Activated CD4-positive, alpha-beta T cell treated with anti-CD3 and anti-CD28 coated beads for 36 hours (primary cell): ENCODE measurements at regions of chr12 and their contacts with region 1.

Region 1: GRCh38 chr12:68958322-68958721 is 25.4 kb upstream of the CPM start:
- DNase-seq: peak; percentile 67
- ATAC-seq: peak; percentile 93
- H3K4me3 Mint-ChIP-seq: no peak overlapping the region
- H3K27ac Mint-ChIP-seq: peak overlapping the region; percentile 91
- H3K4me1 Mint-ChIP-seq: peaks cover 45% of the 10 kb centered on the region
- H3K27me3 Mint-ChIP-seq: peaks cover 2% of the 10 kb centered on the region

Region 2: DNA sequence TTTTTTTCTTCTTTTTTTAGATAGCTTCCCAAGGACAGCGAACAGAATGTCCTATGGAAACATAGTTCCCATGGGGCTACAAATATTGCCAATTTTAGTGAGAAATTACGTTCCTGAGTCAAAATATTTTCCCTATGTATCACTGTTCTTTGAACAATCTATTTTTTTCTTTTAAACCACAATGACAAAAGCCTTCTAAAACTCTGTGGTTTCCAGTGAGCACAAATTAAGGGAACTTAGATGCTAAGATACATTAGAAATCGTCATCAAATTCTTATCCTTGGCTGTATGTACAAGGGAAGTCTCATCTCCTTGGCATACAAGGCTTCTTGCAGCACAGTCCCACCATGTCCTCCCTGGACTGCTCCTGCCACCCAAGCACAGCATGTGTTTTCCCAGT is 43.3 kb before region 1 on chr12:
- CTCF ChIA-PET with region 1: interaction called, 3 read pairs
- POLR2A ChIA-PET with region 1: no interaction called
- intact Hi-C with region 1: loop called (anchors 2 to 5 kb)
- DNase-seq: no peak
- ATAC-seq: no peak
- H3K4me3 Mint-ChIP-seq: no peak overlapping the region
- H3K27ac Mint-ChIP-seq: no peak overlapping the region
- H3K4me1 Mint-ChIP-seq: peaks cover 7% of the 10 kb centered on the region
- H3K27me3 Mint-ChIP-seq: no peaks in the 10 kb centered on the region

Region 3: GRCh38 chr12:68932961-68933893 is 25.1 kb before region 1 on chr12 and contains the start of gene CPM:
- CTCF ChIA-PET with region 1: no interaction called
- POLR2A ChIA-PET with region 1: no interaction called
- intact Hi-C with region 1: loop called in 1 of 2 experiments (anchors 1 kb)
- DNase-seq: peak; percentile 86
- ATAC-seq: peak; percentile 98
- H3K4me3 Mint-ChIP-seq: peak within 1 kb of the TSS; percentile 80
- H3K27ac Mint-ChIP-seq: peak within 1 kb of the TSS; percentile 71
- H3K4me1 Mint-ChIP-seq: peaks cover 9% of the 10 kb centered on the region
- H3K27me3 Mint-ChIP-seq: peaks cover 20% of the 10 kb centered on the region
- total RNA-seq, gene CPM: 18.0 to 18.7 TPM

Region 4: GRCh38 chr12:68977909-68978610 is 19.7 kb after region 1 on chr12:
- CTCF ChIA-PET with region 1: no interaction called
- POLR2A ChIA-PET with region 1: no interaction called
- intact Hi-C with region 1: no loop called
- DNase-seq: no peak
- ATAC-seq: no peak
- H3K4me3 Mint-ChIP-seq: no peak overlapping the region
- H3K27ac Mint-ChIP-seq: no peak overlapping the region
- H3K4me1 Mint-ChIP-seq: peaks cover 2% of the 10 kb centered on the region
- H3K27me3 Mint-ChIP-seq: peaks cover 11% of the 10 kb centered on the region

Region 5: DNA sequence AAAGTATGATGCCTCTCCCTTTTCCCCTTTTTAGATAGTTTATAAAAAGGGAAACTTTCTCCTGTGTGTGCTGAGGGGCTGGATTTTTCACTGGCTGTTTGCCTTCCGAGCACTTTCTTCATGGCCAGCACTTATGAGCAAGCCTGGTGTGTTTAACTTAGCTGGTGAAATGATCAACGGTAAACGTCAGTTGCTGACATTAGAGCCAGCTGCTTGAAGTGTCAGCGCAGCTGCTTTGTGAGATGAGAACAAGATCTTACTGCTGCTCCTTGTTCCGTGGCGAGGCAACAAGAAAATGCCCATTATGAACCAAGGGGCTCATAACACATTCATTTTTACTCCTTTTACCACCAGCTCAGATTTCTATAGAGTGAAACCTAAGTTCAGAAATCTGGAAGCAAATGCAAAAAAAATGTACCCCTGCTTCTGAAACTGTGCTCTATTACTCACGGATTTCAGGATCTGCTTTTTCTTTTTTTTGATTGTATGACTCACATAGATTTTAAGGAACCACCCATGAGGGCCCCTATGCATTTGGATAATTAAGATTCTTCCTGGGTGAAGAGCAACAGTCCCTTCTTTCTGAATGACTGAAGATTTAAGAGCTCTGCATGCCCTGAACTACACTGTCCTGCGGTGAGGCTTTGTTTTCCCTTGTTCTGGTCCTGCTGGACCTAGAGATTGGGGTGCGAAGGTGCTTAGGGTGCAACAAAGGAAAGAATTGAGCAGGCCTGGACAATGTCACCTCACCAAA is 49.0 kb after region 1 on chr12:
- CTCF ChIA-PET with region 1: interaction called, 5 read pairs
- POLR2A ChIA-PET with region 1: no interaction called
- intact Hi-C with region 1: loop called in 1 of 2 experiments (anchors 1 kb)
- DNase-seq: peak; percentile 39
- ATAC-seq: peak; percentile 85
- H3K4me3 Mint-ChIP-seq: no peak overlapping the region
- H3K27ac Mint-ChIP-seq: peak overlapping the region; percentile 61
- H3K4me1 Mint-ChIP-seq: peaks cover 11% of the 10 kb centered on the region
- H3K27me3 Mint-ChIP-seq: peaks cover 29% of the 10 kb centered on the region

Region 6: DNA sequence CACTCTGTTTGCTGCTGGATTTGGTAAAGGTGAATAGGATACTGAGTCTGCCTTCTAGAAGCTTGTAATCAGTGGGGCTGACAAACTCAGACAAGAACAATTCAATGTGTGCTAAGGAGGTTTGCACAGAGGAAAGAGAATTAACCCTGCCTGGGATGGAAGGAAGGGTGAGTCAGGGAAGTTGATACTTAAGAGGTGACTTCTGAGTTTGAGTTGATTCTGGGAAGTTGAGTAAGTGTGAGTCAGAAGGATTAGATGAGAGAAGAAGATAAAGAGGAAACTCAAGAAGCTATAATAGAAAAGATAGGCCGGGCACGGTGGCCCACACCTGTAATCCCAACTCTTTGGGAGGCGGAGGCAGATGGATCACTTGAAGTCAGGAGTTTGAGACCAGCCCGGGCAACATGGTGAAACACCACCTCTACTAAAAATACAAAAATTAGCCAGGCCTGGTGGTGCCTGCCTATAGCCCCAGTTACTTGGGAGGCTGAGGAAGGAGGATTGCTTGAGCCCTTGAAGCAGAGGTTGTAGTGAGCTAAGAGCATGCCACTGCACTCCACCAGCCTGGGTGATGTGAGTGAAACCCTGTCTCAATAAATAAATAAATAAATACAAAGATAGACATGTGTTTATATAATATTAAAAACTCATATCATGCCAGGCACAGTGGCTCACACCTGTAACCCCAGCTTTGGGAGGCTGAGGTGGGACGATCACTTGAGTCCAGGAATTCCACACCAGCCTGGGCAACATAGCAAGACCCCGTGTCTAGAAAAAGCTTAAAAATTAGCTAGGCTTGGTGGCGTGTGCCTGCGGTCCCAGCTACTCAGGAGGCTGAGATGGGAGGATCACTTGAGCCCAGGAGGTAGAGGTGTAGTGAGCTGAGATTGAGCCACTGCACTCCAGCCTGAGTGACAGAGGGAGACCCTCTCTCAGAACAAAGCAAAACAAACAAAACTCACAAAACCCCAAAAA is 101.4 kb after region 1 on chr12:
- CTCF ChIA-PET with region 1: interaction called, 3 read pairs
- POLR2A ChIA-PET with region 1: no interaction called
- intact Hi-C with region 1: loop called (anchors 2 kb)
- DNase-seq: peak; percentile 29
- ATAC-seq: peak; percentile 94
- H3K4me3 Mint-ChIP-seq: no peak overlapping the region
- H3K27ac Mint-ChIP-seq: peak overlapping the region; percentile 75
- H3K4me1 Mint-ChIP-seq: peaks cover 38% of the 10 kb centered on the region
- H3K27me3 Mint-ChIP-seq: peaks cover 3% of the 10 kb centered on the region